HCT116 (cell line): ENCODE measurements at regions of chr3 and their contacts with region 1.

Region 1: DNA sequence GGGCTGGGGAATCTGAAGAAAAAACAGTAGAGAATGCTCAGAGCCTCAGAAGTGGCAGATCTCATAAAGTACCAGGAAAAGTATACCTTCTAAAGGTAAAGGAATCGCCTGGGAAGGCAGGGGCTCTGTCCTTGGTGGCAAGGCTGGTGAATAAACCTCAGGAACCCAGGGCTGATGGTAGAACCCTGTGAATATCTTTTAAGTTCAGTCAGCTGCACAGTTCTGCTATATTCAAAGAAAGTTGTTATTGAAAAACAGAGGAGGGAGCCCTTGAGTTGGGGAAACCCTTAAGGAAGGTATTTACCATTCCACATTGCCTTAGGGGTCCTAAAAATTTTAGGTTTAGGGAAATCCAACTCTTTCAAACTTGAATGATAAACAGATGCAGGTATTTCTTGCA is 31.2 kb downstream of the ZPLD1 start:
- DNase-seq: peak; percentile 6
- ATAC-seq: peak; percentile 68
- H3K4me3 ChIP-seq: no peak overlapping the region
- H3K27ac ChIP-seq: no peak overlapping the region
- H3K4me1 ChIP-seq: peaks cover 0 to 3% of the 10 kb centered on the region in 2 experiments; a peak in 2 of 4 replicates
- H3K27me3 ChIP-seq: no peaks in the 10 kb centered on the region
- CTCF ChIP-seq: peak; percentile 21 to 44 (median 38); a peak in 3 of 6 replicates
- POLR2A ChIP-seq: no peak
- RAD21 ChIP-seq: peak; percentile 58; the same call in 1 of the 2 replicates

Region 2: GRCh38 chr3:102206511-102207031 is 259.4 kb before region 1 on chr3:
- CTCF ChIA-PET with region 1: no interaction called
- POLR2A ChIA-PET with region 1: no interaction called
- RAD21 ChIA-PET with region 1: no interaction called
- intact Hi-C with region 1: no loop called
- DNase-seq: no peak
- ATAC-seq: no peak
- H3K4me3 ChIP-seq: no peak overlapping the region
- H3K27ac ChIP-seq: no peak overlapping the region
- H3K4me1 ChIP-seq: no peaks in the 10 kb centered on the region
- H3K27me3 ChIP-seq: no peaks in the 10 kb centered on the region
- CTCF ChIP-seq: no peak
- POLR2A ChIP-seq: no peak
- RAD21 ChIP-seq: no peak

Region 3: DNA sequence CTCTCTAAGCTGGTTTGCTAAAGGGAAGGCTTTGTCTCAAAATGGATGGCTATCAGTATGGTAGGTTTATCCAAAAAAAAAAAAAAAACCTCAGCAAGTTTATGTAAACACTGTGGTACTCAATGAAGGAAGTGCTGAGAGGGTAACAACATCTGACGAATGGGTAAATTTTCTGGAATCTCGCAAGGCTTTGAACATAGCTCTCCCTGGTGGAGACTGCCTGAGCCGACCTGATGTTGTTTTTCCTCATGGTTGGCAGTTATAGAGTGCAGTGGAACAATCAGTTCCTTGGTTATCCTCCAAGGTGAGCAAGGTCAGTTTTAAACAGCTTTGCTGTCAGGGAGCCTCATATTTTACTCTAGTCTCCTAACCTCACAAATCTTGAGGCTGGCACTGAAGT is 63.5 kb after region 1 on chr3:
- CTCF ChIA-PET with region 1: no interaction called
- POLR2A ChIA-PET with region 1: no interaction called
- RAD21 ChIA-PET with region 1: no interaction called
- intact Hi-C with region 1: loop called (anchors 2 kb)
- DNase-seq: peak; percentile 39
- ATAC-seq: peak; percentile 81
- H3K4me3 ChIP-seq: no peak overlapping the region
- H3K27ac ChIP-seq: no peak overlapping the region
- H3K4me1 ChIP-seq: no peaks in the 10 kb centered on the region
- H3K27me3 ChIP-seq: no peaks in the 10 kb centered on the region
- CTCF ChIP-seq: peak; percentile 51 to 61 (median 59); a peak in 5 of 6 replicates
- POLR2A ChIP-seq: no peak
- RAD21 ChIP-seq: peak; percentile 83

Region 4: GRCh38 chr3:102536456-102536855 is 70.5 kb after region 1 on chr3:
- CTCF ChIA-PET with region 1: interaction called, 3 read pairs
- POLR2A ChIA-PET with region 1: no interaction called
- RAD21 ChIA-PET with region 1: no interaction called
- intact Hi-C with region 1: loop called (anchors 2 kb)
- DNase-seq: peak; percentile 26
- ATAC-seq: peak; percentile 84
- H3K4me3 ChIP-seq: no peak overlapping the region
- H3K27ac ChIP-seq: no peak overlapping the region
- H3K4me1 ChIP-seq: no peaks in the 10 kb centered on the region
- H3K27me3 ChIP-seq: no peaks in the 10 kb centered on the region
- CTCF ChIP-seq: peak; percentile 34 to 63 (median 58); a peak in 5 of 6 replicates
- POLR2A ChIP-seq: no peak
- RAD21 ChIP-seq: peak; percentile 76